Common myeloid progenitor, CD34-positive (primary cell): ENCODE measurements at regions of chr4 and their contacts with region 1.

Region 1: DNA sequence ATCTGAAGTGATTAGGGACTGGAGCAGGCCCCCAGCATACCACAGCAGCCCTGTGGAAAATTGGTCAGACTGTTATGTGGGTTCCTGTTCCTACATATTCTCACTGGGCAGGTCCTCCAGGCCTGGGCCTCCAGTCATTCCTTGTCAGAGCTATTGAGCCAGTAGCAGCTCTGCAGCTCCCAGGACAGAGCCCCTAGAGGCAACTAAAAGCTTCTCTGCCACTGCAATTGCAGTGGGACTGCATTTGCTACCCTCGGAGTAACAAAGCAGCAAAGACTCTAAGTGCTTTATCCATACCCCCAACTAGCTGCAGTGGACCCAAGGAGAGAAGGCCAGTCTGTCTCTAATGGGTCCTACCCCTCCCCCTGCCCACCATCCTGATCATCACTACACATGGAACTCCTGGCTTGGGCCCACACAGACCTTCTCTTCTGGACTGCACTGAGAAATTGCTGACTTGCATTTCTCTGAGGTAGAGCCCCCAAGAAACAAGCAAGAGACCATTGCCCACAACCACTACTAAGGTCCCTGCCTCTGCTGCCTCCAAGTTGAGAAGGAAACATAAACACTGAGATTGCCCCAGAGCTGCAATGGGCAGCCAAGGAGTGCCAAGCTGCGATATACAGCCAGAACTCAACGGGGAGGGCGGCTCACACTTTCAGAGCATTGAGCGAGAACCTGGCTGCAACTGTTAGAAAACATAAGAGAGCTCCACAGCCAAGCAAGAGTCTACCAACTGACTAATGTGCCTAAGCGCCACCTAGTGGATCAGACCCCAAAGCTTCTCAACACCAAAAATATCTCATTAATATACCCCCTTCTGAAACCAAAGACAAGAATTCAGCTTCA is 738.7 kb upstream of the NDST4 start:
- DNase-seq: peak; percentile 56 to 84 (median 76)
- H3K4me3 ChIP-seq: no peak overlapping the region
- H3K27ac ChIP-seq: no peak overlapping the region
- H3K4me1 ChIP-seq: no peaks in the 10 kb centered on the region
- H3K27me3 ChIP-seq: no peaks in the 10 kb centered on the region

Region 2: DNA sequence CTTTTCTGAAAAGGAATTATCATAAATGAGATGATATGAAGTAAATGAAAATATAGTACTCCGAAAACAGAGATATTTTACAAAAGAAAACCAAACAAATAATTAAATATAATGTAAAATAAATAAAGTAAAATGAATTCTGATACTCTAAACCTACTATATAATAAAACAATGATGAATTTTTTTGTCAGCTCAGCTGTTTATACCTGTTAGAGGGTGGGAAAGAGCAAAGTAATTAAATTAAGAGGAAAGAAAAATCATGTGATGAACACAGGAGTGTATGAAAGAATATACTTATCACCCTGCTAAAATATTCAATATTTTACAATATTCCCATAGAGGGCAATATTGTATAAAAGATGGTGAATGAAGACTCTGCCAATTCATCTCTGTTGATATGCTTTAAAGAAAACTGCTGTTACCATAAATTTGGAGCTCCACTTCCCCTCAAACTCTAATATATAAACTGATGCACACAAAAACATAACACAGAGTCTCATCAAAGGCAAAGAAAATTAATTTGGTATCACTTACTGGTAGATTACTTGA is 732.3 kb before region 1 on chr4:
- CTCF ChIA-PET with region 1: interaction called, 10 read pairs
- POLR2A ChIA-PET with region 1: no interaction called
- DNase-seq: peak; percentile 6 to 43 (median 30)
- H3K4me3 ChIP-seq: no peak overlapping the region
- H3K27ac ChIP-seq: no peak overlapping the region
- H3K4me1 ChIP-seq: peaks cover 0 to 5% (median 0%) of the 10 kb centered on the region in 4 experiments
- H3K27me3 ChIP-seq: no peaks in the 10 kb centered on the region

Region 3: GRCh38 chr4:115234405-115235093 is 617.6 kb before region 1 on chr4:
- CTCF ChIA-PET with region 1: interaction called, 14 read pairs
- POLR2A ChIA-PET with region 1: no interaction called
- DNase-seq: peak; percentile 50 to 69 (median 65)
- H3K4me3 ChIP-seq: peak overlapping the region in 1 of 7 experiments; percentile 28
- H3K27ac ChIP-seq: no peak overlapping the region
- H3K4me1 ChIP-seq: peaks cover 2 to 35% (median 20%) of the 10 kb centered on the region in 4 experiments
- H3K27me3 ChIP-seq: no peaks in the 10 kb centered on the region

Region 4: DNA sequence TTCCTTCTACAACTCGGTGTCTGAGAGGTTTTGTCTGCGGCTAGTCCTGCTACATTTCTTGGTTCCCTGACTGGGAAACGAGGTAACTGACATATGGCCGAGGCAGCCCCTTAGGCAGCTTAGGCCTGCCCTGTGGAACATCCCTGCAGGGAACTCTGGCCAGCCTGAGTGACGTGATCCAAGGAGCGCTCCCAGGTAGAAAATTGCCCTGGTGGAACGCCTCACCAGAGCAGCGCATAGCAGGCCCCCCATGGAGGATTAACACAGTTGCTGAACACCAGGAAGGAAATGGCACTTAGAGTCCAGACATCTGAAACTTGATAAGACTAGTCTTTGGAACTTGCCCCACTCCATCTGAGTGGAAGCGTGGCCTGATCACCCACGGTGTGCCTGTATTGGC is 98.7 kb after region 1 on chr4:
- CTCF ChIA-PET with region 1: no interaction called
- POLR2A ChIA-PET with region 1: no interaction called
- DNase-seq: no peak
- H3K4me3 ChIP-seq: no peak overlapping the region
- H3K27ac ChIP-seq: no peak overlapping the region
- H3K4me1 ChIP-seq: no peaks in the 10 kb centered on the region
- H3K27me3 ChIP-seq: no peaks in the 10 kb centered on the region

Region 5: GRCh38 chr4:115986573-115986972 is 134.4 kb after region 1 on chr4:
- CTCF ChIA-PET with region 1: no interaction called
- POLR2A ChIA-PET with region 1: no interaction called
- DNase-seq: no peak
- H3K4me3 ChIP-seq: no peak overlapping the region
- H3K27ac ChIP-seq: no peak overlapping the region
- H3K4me1 ChIP-seq: no peaks in the 10 kb centered on the region
- H3K27me3 ChIP-seq: no peaks in the 10 kb centered on the region

Region 6: DNA sequence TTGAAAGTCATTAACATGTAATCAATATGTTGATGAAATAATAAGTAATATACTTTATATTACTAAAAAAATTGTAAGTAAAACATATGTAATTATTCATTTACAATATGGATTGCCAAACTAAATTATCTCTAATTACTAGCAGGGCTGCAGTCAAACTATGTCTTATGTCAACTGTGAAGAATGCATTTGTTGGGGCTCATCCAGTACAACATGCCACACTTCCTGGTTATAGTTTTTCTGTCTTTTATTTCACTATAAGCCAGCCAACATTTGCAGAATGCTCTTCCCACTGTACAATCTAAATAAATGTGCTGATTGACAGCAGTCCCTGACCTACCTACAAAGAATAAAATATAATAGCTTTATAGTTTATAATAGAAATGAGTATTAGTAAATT is 236.6 kb after region 1 on chr4:
- CTCF ChIA-PET with region 1: no interaction called
- POLR2A ChIA-PET with region 1: no interaction called
- DNase-seq: no peak
- H3K4me3 ChIP-seq: no peak overlapping the region
- H3K27ac ChIP-seq: no peak overlapping the region
- H3K4me1 ChIP-seq: no peaks in the 10 kb centered on the region
- H3K27me3 ChIP-seq: no peaks in the 10 kb centered on the region